Naive thymus-derived CD4-positive, alpha-beta T cell (primary cell): ENCODE measurements at regions of chr6 and their contacts with region 1.

Region 1: GRCh38 chr6:18503593-18504231 is 116.6 kb downstream of the RNF144B start:
- DNase-seq: peak in 6 of 9 donors; percentile 19 to 54 (median 38)
- ATAC-seq: peak; percentile 63
- H3K4me3 ChIP-seq: no peak overlapping the region
- H3K4me3 Mint-ChIP-seq: peak overlapping the region in 2 of 10 donors; percentile 29 to 50
- H3K27ac ChIP-seq: no peak overlapping the region
- H3K27ac Mint-ChIP-seq: no peak overlapping the region
- H3K4me1 ChIP-seq: no peaks in the 10 kb centered on the region
- H3K4me1 Mint-ChIP-seq: peaks cover 0 to 4% (median 0%) of the 10 kb centered on the region in 7 donors
- H3K27me3 ChIP-seq: no peaks in the 10 kb centered on the region
- H3K27me3 Mint-ChIP-seq: peaks cover 0 to 7% (median 4%) of the 10 kb centered on the region in 5 donors

Region 2: GRCh38 chr6:17820055-17820454 is 683.7 kb before region 1 on chr6:
- CTCF ChIA-PET with region 1: no interaction called
- POLR2A ChIA-PET with region 1: no interaction called
- intact Hi-C with region 1: loop called in 1 of 2 experiments (anchors 5 kb)
- DNase-seq: no peak
- ATAC-seq: no peak
- H3K4me3 ChIP-seq: no peak overlapping the region
- H3K4me3 Mint-ChIP-seq: no peak overlapping the region
- H3K27ac ChIP-seq: no peak overlapping the region
- H3K27ac Mint-ChIP-seq: no peak overlapping the region
- H3K4me1 ChIP-seq: no peaks in the 10 kb centered on the region
- H3K4me1 Mint-ChIP-seq: peaks cover 0 to 2% (median 0%) of the 10 kb centered on the region in 7 donors
- H3K27me3 ChIP-seq: no peaks in the 10 kb centered on the region
- H3K27me3 Mint-ChIP-seq: peaks cover 0 to 12% (median 4%) of the 10 kb centered on the region in 5 donors

Region 3: DNA sequence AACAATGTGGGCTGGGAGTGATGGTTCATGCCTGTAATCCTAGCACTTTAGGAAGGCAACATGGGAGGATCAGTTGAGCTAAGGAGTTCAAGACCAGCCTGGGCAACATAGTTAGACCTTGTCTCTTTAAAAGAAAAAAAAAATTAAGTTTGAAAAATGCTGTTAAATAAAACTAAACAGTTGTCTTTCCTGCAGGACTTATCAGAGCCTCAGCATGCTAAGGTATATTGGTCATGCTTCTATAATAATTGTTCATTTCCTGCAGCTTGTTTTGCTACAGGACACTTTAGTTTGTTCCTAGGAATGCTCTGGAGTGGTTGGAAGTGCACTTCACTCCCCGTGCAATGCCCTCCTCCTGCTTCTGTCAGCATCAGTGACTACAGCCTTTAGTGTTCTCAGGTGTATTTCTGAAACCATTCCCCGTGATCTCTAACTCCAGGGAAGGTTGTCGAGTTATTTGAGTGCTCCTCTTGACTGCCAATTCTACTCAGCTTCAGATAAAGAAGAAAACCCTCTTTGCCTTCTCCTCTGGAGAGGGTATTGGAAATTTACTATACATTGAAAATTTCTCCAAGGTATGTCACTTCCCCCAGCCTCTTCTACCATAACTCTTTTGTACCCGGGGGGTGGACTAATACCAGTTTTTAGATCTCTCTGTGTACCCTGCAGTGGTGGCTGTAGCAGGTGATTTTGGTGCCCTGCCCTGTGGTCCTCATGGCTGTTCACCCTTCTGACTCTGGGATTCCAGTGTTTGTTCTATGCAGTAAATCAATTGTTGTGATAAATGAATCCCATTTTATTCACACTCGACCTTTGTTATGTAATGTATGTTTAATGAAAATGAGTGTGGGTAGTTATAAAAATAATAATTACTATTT is 415.1 kb before region 1 on chr6:
- CTCF ChIA-PET with region 1: no interaction called
- POLR2A ChIA-PET with region 1: no interaction called
- intact Hi-C with region 1: no loop called
- DNase-seq: no peak
- ATAC-seq: no peak
- H3K4me3 ChIP-seq: no peak overlapping the region
- H3K4me3 Mint-ChIP-seq: no peak overlapping the region
- H3K27ac ChIP-seq: no peak overlapping the region
- H3K27ac Mint-ChIP-seq: no peak overlapping the region
- H3K4me1 ChIP-seq: no peaks in the 10 kb centered on the region
- H3K4me1 Mint-ChIP-seq: no peaks in the 10 kb centered on the region
- H3K27me3 ChIP-seq: no peaks in the 10 kb centered on the region
- H3K27me3 Mint-ChIP-seq: peaks cover 0 to 20% (median 13%) of the 10 kb centered on the region in 5 donors